ENCODE measurements at regions of chr11 and their contacts with region 1.

Region 1: GRCh38 chr11:58675334-58676155 is 53.1 kb downstream of the CNTF start:
- DNase-seq: peak; percentile 86
- ATAC-seq: peak; percentile 95

Region 2: GRCh38 chr11:58579192-58580129 is 96.1 kb before region 1 on chr11:
- intact Hi-C with region 1: loop called (anchors 10 kb)
- DNase-seq: peak; percentile 95
- ATAC-seq: peak; percentile 81

Measured in Right ventricle myocardium superior (tissue), 1 donor.